ENCODE measurements at regions of chr10 and their contacts with region 1.

Region 1: GRCh38 chr10:98425511-98426352 is 10.8 kb upstream of the PYROXD2 start:
- DNase-seq: peak; percentile 48
- ATAC-seq: peak; percentile 93
- H3K4me3 ChIP-seq: no peak overlapping the region
- H3K27ac ChIP-seq: no peak overlapping the region
- H3K4me1 ChIP-seq: no peaks in the 10 kb centered on the region
- H3K27me3 ChIP-seq: no peaks in the 10 kb centered on the region
- CTCF ChIP-seq: peak; percentile 58 to 99 (median 95); a peak in 5 of 6 replicates
- POLR2A ChIP-seq: no peak
- RAD21 ChIP-seq: peak; percentile 80

Region 2: DNA sequence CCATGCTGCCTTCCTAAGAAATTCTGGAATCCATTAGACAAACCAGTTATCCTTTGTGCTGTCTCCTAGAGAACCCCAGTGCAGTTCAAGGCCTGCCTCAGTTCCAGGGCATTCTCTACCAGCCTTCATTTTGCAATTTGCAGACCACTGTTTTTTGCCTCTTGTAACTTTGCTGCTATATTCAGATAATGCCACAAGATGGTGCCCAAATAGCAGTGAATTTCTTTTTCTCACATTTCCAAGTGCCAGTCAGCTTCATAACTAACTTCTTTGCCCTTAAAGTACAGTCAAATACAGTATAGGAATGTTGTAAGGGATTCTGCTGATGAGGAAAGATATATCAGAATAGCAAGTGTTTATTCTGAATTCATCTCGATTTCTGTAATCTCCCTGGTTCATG is 182.9 kb before region 1 on chr10:
- CTCF ChIA-PET with region 1: no interaction called
- POLR2A ChIA-PET with region 1: no interaction called
- RAD21 ChIA-PET with region 1: interaction called in 1 of 2 experiments, 10 read pairs
- intact Hi-C with region 1: no loop called
- DNase-seq: no peak
- ATAC-seq: peak; percentile 49; the same call in 1 of the 2 replicates
- H3K4me3 ChIP-seq: no peak overlapping the region
- H3K27ac ChIP-seq: no peak overlapping the region
- H3K4me1 ChIP-seq: no peaks in the 10 kb centered on the region
- H3K27me3 ChIP-seq: no peaks in the 10 kb centered on the region
- CTCF ChIP-seq: peak; percentile 15 to 53 (median 47); a peak in 4 of 6 replicates
- POLR2A ChIP-seq: no peak
- RAD21 ChIP-seq: peak; percentile 61

Region 3: DNA sequence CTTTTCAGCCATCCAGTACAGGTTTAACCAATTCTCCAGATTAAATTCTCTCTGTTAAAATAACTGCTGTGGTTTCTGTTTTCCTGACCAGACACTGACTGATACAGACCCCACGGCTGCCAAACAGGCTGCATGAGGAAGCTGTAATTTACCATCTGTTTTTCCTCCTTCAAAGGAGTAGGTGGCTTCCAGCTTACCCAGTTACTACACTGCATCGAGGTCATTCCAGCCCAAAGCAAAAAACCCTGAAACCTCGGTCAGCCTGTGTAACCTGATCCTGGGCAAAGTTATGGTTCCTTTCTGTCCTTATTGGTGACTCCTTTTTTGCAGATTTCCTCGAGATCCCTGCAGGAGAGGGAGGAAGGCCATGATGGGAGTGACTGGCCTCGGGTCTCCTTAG is 129.8 kb before region 1 on chr10:
- CTCF ChIA-PET with region 1: no interaction called
- POLR2A ChIA-PET with region 1: no interaction called
- RAD21 ChIA-PET with region 1: no interaction called
- intact Hi-C with region 1: no loop called
- DNase-seq: no peak
- ATAC-seq: no peak; the same call in 1 of the 2 replicates
- H3K4me3 ChIP-seq: no peak overlapping the region
- H3K27ac ChIP-seq: no peak overlapping the region
- H3K4me1 ChIP-seq: peaks cover 17% of the 10 kb centered on the region in 2 experiments
- H3K27me3 ChIP-seq: peaks cover 55% of the 10 kb centered on the region
- CTCF ChIP-seq: no peak
- POLR2A ChIP-seq: no peak
- RAD21 ChIP-seq: no peak

Region 4: GRCh38 chr10:98414932-98415730 is 10.6 kb before region 1 on chr10 and contains the start of gene PYROXD2:
- CTCF ChIA-PET with region 1: interaction called, 22 read pairs
- POLR2A ChIA-PET with region 1: interaction called, 5 read pairs
- RAD21 ChIA-PET with region 1: no interaction called
- intact Hi-C with region 1: no loop called
- DNase-seq: peak; percentile 81
- ATAC-seq: peak; percentile 96
- H3K4me3 ChIP-seq: peak within 1 kb of the TSS; percentile 82 to 92
- H3K27ac ChIP-seq: peak within 1 kb of the TSS; percentile 53
- H3K4me1 ChIP-seq: peaks cover 13 to 22% of the 10 kb centered on the region in 2 experiments
- H3K27me3 ChIP-seq: no peaks in the 10 kb centered on the region
- CTCF ChIP-seq: peak in 1 of 3 experiments; percentile 16; a peak in 1 of 6 replicates
- POLR2A ChIP-seq: peak; percentile 81
- RAD21 ChIP-seq: no peak
- total RNA-seq, gene PYROXD2: 14.2 TPM

Region 5: DNA sequence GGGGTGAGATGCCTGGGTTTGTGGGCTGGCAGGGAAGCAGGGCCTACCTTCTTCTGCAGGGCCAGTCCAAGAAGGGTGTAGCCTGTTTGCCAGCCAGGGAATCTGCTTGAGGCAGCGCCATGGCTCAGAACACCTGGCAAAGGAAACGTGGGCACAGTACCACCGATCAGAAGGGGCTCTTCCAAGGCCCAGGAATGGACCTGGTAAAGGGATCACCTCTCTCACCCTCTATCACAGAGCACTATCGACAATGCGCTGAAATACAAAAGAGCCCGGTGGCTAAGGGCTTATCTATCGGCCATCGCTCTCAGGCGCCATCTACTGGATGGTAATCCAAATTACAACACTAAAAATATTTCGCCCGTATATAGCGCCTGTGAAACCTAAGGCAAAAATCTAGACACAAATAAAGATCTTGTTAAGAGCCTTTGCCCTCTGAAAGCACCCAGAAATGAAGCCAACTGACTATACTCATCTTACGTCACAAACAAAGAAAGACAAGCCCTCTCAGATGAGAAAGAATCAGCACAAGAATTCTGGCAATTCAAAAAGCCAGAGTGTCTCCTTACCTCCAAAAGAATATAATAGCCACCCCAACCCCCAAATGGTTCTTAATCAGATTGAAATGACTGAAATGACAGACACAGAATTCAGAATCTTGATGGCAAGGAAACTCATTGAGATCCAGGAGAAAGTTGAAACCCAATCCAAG is 238.8 kb after region 1 on chr10:
- CTCF ChIA-PET with region 1: interaction called, 3 read pairs
- POLR2A ChIA-PET with region 1: no interaction called
- RAD21 ChIA-PET with region 1: no interaction called
- intact Hi-C with region 1: loop called (anchors 1 kb)
- DNase-seq: peak; percentile 47
- ATAC-seq: peak; percentile 98
- H3K4me3 ChIP-seq: no peak overlapping the region
- H3K27ac ChIP-seq: no peak overlapping the region
- H3K4me1 ChIP-seq: no peaks in the 10 kb centered on the region
- H3K27me3 ChIP-seq: peaks cover 26% of the 10 kb centered on the region
- CTCF ChIP-seq: peak; percentile 83 to 94 (median 86)
- POLR2A ChIP-seq: no peak
- RAD21 ChIP-seq: peak; percentile 85

Region 6: DNA sequence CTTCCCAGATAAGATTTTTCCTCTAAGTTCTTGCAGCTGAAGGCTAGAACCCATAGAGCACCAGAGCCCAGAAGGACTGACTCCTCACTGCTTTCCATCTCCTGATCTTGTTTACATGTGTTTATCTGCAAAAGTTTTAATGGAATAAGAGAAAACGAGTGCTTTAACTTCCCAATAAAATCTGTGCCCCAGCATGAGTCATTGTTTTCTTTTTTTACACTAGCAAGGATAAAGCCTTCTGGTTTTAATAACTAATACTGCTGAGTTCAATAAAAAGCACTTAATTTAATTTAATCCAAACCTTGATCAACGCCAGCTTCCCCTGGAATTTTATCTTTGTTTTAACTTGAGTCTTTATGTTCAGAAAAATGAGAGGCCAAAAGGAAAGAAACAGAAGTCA is 582.3 kb after region 1 on chr10:
- CTCF ChIA-PET with region 1: no interaction called
- POLR2A ChIA-PET with region 1: no interaction called
- RAD21 ChIA-PET with region 1: no interaction called
- intact Hi-C with region 1: no loop called
- DNase-seq: no peak
- ATAC-seq: no peak
- H3K4me3 ChIP-seq: no peak overlapping the region
- H3K27ac ChIP-seq: no peak overlapping the region
- H3K4me1 ChIP-seq: no peaks in the 10 kb centered on the region
- H3K27me3 ChIP-seq: no peaks in the 10 kb centered on the region; the same call in 1 of the 2 replicates
- CTCF ChIP-seq: no peak
- POLR2A ChIP-seq: no peak
- RAD21 ChIP-seq: no peak